CD14-positive monocyte (primary cell): ENCODE measurements at regions of chr20 and their contacts with region 1.

Region 1: DNA sequence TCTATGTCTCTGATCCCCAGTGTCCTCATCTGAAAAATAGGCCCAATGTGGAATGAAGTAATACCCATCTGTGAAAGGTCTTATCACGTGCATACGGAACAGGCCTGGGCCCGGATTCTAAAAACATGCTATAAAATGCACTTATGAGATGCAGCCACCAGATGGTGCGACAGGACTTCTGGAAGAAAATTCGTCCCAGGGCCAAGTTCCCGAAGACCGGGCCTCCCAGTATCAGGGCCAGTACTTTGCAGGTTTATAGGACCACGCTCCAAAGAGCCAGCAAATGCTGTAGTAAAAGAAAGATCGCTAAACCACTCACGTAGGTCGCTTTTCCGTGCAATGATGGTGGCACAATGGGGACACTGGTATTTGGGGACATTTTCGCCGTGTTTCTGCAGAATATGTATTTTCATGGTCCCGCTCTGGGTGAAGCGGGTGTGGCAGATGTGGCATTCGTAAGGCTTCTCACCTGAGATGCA is 10.6 kb downstream of the CTCFL start:
- DNase-seq: peak; percentile 56 to 73 (median 70)
- H3K4me3 ChIP-seq: no peak overlapping the region
- H3K4me3 Mint-ChIP-seq: peak overlapping the region in 1 of 2 donors; percentile 57
- H3K27ac ChIP-seq: no peak overlapping the region
- H3K27ac Mint-ChIP-seq: no peak overlapping the region
- H3K4me1 ChIP-seq: no peaks in the 10 kb centered on the region
- H3K4me1 Mint-ChIP-seq: peaks cover 4% of the 10 kb centered on the region
- H3K27me3 ChIP-seq: peaks cover 12 to 39% of the 10 kb centered on the region in 2 donors
- H3K27me3 Mint-ChIP-seq: peaks cover 38 to 43% (median 42%) of the 10 kb centered on the region in 3 donors
- CTCF ChIP-seq: peak; percentile 85

Region 2: GRCh38 chr20:57108732-57109573 is 405.4 kb before region 1 on chr20:
- intact Hi-C with region 1: no loop called
- DNase-seq: no peak
- H3K4me3 ChIP-seq: no peak overlapping the region
- H3K4me3 Mint-ChIP-seq: no peak overlapping the region
- H3K27ac ChIP-seq: no peak overlapping the region
- H3K27ac Mint-ChIP-seq: no peak overlapping the region
- H3K4me1 ChIP-seq: no peaks in the 10 kb centered on the region
- H3K4me1 Mint-ChIP-seq: no peaks in the 10 kb centered on the region
- H3K27me3 ChIP-seq: no peaks in the 10 kb centered on the region
- H3K27me3 Mint-ChIP-seq: peaks cover 0 to 8% (median 4%) of the 10 kb centered on the region in 3 donors
- CTCF ChIP-seq: no peak

Region 3: DNA sequence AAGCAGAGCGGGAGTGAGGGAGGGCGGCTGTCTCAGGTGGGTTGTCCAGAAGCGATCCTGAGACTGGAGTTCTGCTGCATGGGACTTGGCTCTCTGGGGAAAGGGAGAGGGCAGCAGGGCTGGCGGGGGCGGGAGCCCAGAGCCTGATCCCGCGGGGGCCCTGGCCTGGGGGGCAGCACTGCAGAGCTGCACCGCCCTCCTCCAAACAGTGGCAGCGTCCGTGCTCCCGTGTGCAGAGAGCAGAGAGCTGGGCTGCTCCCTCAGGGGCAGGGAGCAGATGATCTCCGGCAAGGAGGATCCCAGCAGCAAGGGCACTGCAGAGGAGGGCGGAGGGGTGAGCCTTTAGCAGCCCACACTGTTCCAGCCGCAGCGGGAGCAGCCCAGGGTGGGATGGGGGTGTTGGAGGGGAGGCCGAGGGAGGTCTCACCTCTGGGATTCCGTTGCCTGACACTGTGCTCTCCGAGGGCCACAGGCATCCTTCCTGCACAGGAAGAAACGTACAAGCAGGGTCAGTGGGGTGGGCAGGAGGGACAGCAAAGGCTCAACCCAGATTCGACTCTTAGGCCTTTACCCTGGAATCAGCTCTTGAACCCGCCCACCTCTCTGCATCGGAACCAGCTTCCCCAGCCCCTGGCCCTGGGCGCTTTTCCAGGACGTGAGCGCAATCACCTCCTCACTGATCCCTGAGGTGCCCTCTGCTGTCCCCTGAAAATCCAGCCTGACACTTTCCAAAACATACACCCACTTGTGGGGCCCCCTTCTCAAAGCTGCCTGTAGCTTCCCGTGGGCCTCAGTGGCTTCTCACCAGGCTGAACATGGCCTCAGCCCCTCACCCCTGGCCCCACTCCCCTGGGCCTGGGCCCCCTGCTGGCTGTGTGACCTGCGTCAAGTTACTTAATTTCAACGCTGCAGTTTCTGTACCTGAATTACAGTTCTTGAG is 138.6 kb after region 1 on chr20:
- intact Hi-C with region 1: no loop called
- DNase-seq: no peak
- H3K4me3 ChIP-seq: no peak overlapping the region
- H3K4me3 Mint-ChIP-seq: no peak overlapping the region
- H3K27ac ChIP-seq: no peak overlapping the region
- H3K27ac Mint-ChIP-seq: no peak overlapping the region
- H3K4me1 ChIP-seq: no peaks in the 10 kb centered on the region
- H3K4me1 Mint-ChIP-seq: peaks cover 3% of the 10 kb centered on the region
- H3K27me3 ChIP-seq: no peaks in the 10 kb centered on the region
- H3K27me3 Mint-ChIP-seq: peaks cover 5 to 13% (median 9%) of the 10 kb centered on the region in 3 donors
- CTCF ChIP-seq: no peak

Region 4: DNA sequence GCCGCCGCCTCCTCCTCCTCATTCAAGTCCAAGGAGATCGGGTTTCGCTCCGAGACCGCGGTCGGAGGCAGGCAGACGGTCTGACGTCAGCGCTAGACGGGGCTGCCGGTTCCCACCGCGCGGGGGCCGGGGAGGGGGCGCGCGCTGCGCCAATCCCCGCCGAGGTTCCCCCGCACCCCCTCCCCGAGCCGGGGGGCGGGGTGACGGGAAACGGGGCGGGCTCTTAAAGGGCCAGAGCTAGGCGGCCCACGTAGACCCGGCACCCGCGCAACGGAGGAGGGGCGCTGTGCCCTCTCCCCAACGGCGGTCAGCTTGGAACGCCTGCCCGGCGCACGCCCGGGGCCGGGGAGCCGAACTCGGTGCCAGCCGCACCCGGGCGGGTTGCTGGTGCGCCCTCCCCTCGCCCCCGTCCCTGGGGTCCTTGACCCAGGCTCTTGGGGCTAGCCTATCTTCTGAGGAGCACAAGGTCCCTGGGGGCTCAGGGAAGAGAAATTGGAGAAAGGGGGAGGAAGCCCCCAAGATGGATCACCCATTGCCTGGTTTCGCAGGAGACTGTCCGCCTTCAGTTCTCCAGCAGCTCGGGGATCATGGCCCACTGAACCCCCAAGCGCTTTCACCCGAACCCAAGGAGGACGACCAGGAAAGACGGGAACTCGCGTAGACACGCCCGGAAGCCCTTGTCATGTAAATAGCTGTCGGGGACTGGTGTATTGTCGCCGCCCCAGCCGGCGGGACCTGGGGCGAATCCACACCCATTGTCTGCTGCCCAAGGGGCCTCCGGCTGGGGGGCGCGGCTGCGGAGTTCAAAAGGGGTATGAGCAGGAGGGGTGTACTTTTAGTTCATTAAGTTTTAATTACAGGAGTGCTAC is 195.9 kb after region 1 on chr20 and contains the start of gene PMEPA1:
- intact Hi-C with region 1: loop called in 1 of 2 experiments (anchors 10 kb)
- DNase-seq: peak; percentile 80 to 90 (median 81)
- H3K4me3 ChIP-seq: peak within 1 kb of the TSS; percentile 49 to 76 (median 59)
- H3K4me3 Mint-ChIP-seq: peak within 1 kb of the TSS; percentile 82 to 85
- H3K27ac ChIP-seq: no peak within 1 kb of the TSS
- H3K27ac Mint-ChIP-seq: peak within 1 kb of the TSS in 6 of 7 donors; percentile 30 to 83 (median 62)
- H3K4me1 ChIP-seq: peaks cover 22 to 23% of the 10 kb centered on the region in 2 donors
- H3K4me1 Mint-ChIP-seq: peaks cover 33% of the 10 kb centered on the region
- H3K27me3 ChIP-seq: peaks cover 14 to 41% of the 10 kb centered on the region in 2 donors
- H3K27me3 Mint-ChIP-seq: peaks cover 50 to 65% (median 53%) of the 10 kb centered on the region in 3 donors
- CTCF ChIP-seq: no peak
- polyA plus RNA-seq, gene PMEPA1: 0.12 to 0.73 (median 0.59) TPM

Region 5: DNA sequence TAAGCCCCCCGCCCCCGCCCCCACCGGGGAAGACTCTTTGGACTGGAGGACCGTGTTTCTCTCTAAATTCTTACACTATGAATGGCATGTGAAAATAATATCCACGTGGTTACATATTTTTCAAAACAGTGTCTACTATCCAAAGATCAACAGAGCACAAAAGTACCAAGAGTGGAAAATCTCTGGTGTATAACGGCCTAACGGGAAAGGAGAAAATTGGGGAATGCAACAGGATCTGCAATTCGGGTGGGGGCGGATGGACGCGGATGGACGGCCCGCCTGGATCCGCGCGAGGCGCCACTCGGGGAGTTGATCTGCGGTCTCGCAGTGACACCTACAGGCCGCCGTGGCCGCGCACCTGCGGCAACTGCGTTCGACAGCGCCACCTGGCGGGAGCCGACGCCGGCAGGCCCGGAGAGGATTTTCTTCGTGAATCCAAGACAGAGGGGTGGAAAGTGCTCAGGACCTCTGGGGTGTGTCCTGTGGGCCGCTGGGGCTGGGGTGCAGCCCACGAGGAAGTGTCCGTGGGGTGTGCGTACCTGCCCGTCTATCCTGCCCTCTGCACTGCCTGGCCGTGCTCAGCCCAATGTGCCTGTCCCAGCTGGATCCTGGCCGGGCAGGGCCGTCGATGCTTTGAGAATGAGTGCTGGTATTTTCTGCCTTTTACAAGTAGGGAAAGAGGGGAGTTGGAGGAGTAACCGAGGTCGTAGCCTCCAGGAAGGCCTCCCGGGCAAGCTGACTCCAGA is 695.5 kb after region 1 on chr20:
- intact Hi-C with region 1: loop called (anchors 2 to 5 kb)
- DNase-seq: peak; percentile 69 to 78 (median 71)
- H3K4me3 ChIP-seq: no peak overlapping the region
- H3K4me3 Mint-ChIP-seq: peak overlapping the region in 1 of 2 donors; percentile 46
- H3K27ac ChIP-seq: no peak overlapping the region
- H3K27ac Mint-ChIP-seq: peak overlapping the region in 1 of 7 donors; percentile 6
- H3K4me1 ChIP-seq: no peaks in the 10 kb centered on the region
- H3K4me1 Mint-ChIP-seq: peaks cover 9% of the 10 kb centered on the region
- H3K27me3 ChIP-seq: no peaks in the 10 kb centered on the region
- H3K27me3 Mint-ChIP-seq: peaks cover 16 to 18% (median 16%) of the 10 kb centered on the region in 3 donors
- CTCF ChIP-seq: peak; percentile 100